ENCODE measurements at regions of chr3 and their contacts with region 1.

Region 1: DNA sequence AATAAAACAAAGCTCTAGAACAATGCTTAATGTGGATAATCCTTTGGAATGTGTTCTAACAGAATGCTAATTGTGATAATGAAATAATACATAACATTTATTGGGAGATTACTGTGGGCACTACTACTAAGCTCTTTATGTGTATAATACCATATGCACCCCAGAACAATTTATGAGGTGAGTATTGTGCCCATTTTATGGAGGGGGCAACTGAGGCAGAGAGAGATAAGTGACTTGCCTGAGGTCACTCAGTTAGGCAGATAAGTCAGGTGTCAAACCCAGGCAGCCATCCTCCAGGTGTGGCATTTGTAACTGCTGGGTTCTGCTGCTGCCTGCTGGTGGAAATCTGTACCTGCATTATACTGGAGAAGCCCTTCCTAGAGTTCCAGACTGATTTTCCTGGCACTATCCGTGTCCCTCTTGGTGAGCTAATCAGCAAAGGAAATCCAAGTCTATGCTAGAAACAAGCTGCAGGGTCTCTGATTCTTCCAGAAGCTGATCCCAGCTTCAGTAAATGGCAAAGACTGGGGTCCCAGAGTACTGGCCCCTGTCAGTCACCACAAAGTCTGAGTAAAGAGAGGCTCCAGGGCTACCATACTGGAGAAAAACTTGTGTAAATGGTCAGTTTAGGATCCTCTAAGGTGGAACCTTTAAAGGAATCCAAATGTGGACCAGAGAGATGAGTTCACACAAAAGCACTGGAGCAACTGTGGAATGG is 22.6 kb upstream of the RBP1 start:
- DNase-seq: peak; percentile 8
- H3K4me3 ChIP-seq: no peak overlapping the region
- H3K27ac ChIP-seq: no peak overlapping the region
- H3K27me3 ChIP-seq: no peaks in the 10 kb centered on the region
- CTCF ChIP-seq: peak; percentile 91

Region 2: GRCh38 chr3:139427283-139427993 is 134.7 kb before region 1 on chr3:
- CTCF ChIA-PET with region 1: interaction called, 126 read pairs
- POLR2A ChIA-PET with region 1: no interaction called
- DNase-seq: peak; percentile 34
- H3K4me3 ChIP-seq: no peak overlapping the region
- H3K27ac ChIP-seq: no peak overlapping the region
- H3K27me3 ChIP-seq: no peaks in the 10 kb centered on the region
- CTCF ChIP-seq: peak; percentile 85

Region 3: GRCh38 chr3:139434764-139435307 is 127.3 kb before region 1 on chr3:
- CTCF ChIA-PET with region 1: interaction called, 10 read pairs
- POLR2A ChIA-PET with region 1: no interaction called
- DNase-seq: no peak
- H3K4me3 ChIP-seq: no peak overlapping the region
- H3K27ac ChIP-seq: no peak overlapping the region
- H3K27me3 ChIP-seq: peaks cover 2% of the 10 kb centered on the region
- CTCF ChIP-seq: no peak

Region 4: GRCh38 chr3:139533781-139534443 is 28.2 kb before region 1 on chr3:
- CTCF ChIA-PET with region 1: interaction called, 11 read pairs
- POLR2A ChIA-PET with region 1: no interaction called
- DNase-seq: peak; percentile 38
- H3K4me3 ChIP-seq: no peak overlapping the region
- H3K27ac ChIP-seq: peak overlapping the region; percentile 97
- H3K27me3 ChIP-seq: no peaks in the 10 kb centered on the region
- CTCF ChIP-seq: no peak

Region 5: DNA sequence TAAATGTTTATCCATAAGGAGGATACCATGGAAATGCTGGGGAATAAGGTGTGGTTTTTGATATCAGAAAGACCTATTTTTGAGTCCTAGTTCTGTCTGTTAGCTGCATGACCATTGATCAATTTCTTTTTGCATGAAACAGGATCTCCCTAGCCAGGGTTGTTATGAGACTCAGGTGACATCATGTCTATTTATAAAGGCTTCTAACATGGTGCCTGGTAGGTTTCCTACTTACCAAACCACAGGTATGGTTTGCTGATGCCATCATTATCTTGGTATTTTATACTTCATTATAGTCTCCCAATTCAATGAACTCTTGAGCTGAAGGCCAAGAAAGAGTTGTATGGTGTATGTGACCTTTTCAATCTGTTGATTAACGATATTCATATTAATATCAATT is 516.8 kb after region 1 on chr3:
- CTCF ChIA-PET with region 1: no interaction called
- POLR2A ChIA-PET with region 1: no interaction called
- DNase-seq: no peak
- H3K4me3 ChIP-seq: no peak overlapping the region
- H3K27ac ChIP-seq: no peak overlapping the region
- H3K27me3 ChIP-seq: no peaks in the 10 kb centered on the region
- CTCF ChIP-seq: no peak